Activated naive CD4-positive, alpha-beta T cell treated with anti-CD3 and anti-CD28 coated beads for 36 hours (primary cell): ENCODE measurements at regions of chr7 and their contacts with region 1.

Region 1: DNA sequence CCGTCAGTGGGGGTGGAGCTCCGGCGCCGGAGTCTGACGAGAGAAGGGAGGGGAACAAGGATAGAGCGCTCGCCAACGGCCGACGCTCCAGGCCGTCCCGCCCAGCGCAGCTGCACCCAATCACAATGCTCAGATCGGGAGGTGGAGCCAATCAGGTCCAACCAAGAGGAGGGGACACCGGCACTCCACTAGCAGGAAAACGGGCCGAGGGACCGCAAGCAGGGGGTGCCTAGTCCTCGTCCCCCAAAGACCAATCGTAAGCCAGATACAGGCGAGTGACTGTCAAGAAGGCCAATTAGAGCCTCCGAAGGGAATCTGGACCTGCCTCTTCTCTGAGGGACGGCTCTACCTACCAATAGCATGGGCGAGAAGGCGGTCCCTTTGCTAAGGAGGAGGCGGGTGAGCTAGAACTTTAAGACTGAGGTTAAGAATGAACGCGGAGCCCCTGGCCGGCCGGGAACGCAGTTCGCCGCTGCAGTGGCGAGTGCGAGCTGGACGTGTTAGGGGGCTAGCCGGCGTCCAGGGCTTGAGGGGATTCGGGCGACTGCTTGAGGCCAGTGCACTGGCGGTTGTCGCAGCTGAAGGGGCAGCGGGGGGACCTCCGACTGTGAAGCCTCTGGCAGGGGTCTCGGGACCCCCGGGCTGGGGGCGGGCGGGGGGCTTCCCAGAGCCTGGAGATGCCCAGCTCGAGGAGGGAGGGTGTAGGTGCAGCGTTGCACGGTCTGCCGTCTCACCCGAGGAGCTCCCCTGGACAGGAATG is at the start of gene FBXO24:
- DNase-seq: peak; percentile 100
- H3K4me3 Mint-ChIP-seq: peak within 1 kb of the TSS; percentile 89
- H3K27ac Mint-ChIP-seq: peak within 1 kb of the TSS; percentile 97
- H3K4me1 Mint-ChIP-seq: peaks cover 27% of the 10 kb centered on the region
- H3K27me3 Mint-ChIP-seq: peaks cover 7% of the 10 kb centered on the region
- total RNA-seq, gene FBXO24: 1.5 to 2.6 TPM

Region 2: DNA sequence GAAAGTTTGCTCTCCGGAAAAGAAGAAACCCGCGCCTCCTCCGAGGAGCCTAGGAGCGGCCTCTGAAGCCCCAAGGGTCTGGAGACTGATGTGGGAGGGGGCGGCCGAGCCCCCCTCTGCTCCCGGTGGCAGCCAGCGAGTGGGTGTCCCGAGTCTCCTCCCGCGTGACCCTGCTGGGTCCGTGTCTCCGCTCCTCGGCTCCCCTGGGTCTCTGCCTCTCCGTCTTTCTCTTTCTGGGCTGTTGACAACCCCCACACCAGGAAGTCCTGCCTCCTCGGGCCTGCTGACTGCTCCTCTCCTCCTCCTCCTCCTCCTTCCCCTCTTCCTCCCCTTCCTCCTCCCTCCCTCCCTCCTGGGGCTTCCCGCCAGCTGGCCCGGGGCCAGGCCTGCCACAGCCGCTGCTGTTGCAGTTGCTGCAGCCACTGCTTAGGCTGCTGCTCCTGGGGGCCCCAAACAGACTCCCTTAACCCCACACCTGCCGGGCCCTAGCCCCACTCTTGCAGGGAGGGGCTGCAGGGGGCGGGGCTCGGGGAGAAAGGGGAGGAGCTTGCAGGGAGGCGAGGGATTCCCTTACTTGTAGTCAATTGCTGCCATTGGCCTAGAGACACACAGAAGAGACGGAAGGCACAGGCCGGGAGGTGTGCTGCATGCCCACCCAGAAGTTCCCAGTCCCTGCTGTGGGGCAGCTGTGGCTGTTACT is 107.3 kb before region 1 on chr7 and contains the start of gene TSC22D4:
- CTCF ChIA-PET with region 1: interaction called, 4 read pairs
- intact Hi-C with region 1: loop called (anchors 1 kb)
- DNase-seq: peak; percentile 93
- H3K4me3 Mint-ChIP-seq: peak within 1 kb of the TSS; percentile 98
- H3K27ac Mint-ChIP-seq: peak within 1 kb of the TSS; percentile 92
- H3K4me1 Mint-ChIP-seq: peaks cover 42% of the 10 kb centered on the region
- H3K27me3 Mint-ChIP-seq: no peaks in the 10 kb centered on the region
- total RNA-seq, gene TSC22D4: 46.0 to 48.7 TPM

Region 3: GRCh38 chr7:100556541-100556940 is 29.9 kb before region 1 on chr7:
- CTCF ChIA-PET with region 1: interaction called, 10 read pairs
- intact Hi-C with region 1: no loop called
- DNase-seq: no peak
- H3K4me3 Mint-ChIP-seq: no peak overlapping the region
- H3K27ac Mint-ChIP-seq: no peak overlapping the region
- H3K4me1 Mint-ChIP-seq: peaks cover 9% of the 10 kb centered on the region
- H3K27me3 Mint-ChIP-seq: no peaks in the 10 kb centered on the region

Region 4: GRCh38 chr7:100604028-100604975 is 17.9 kb after region 1 on chr7:
- CTCF ChIA-PET with region 1: interaction called, 8 read pairs
- intact Hi-C with region 1: loop called (anchors 1 kb)
- DNase-seq: peak; percentile 77
- H3K4me3 Mint-ChIP-seq: peak overlapping the region; percentile 75
- H3K27ac Mint-ChIP-seq: peak overlapping the region; percentile 67
- H3K4me1 Mint-ChIP-seq: peaks cover 12% of the 10 kb centered on the region
- H3K27me3 Mint-ChIP-seq: no peaks in the 10 kb centered on the region

Region 5: GRCh38 chr7:100673300-100673941 is 87.0 kb after region 1 on chr7 and contains the start of gene GNB2:
- CTCF ChIA-PET with region 1: interaction called, 3 read pairs
- intact Hi-C with region 1: loop called (anchors 1 kb)
- DNase-seq: peak; percentile 100
- H3K4me3 Mint-ChIP-seq: peak within 1 kb of the TSS; percentile 97
- H3K27ac Mint-ChIP-seq: peak within 1 kb of the TSS; percentile 95
- H3K4me1 Mint-ChIP-seq: peaks cover 17% of the 10 kb centered on the region
- H3K27me3 Mint-ChIP-seq: no peaks in the 10 kb centered on the region
- total RNA-seq, gene GNB2: 221 TPM

Region 6: DNA sequence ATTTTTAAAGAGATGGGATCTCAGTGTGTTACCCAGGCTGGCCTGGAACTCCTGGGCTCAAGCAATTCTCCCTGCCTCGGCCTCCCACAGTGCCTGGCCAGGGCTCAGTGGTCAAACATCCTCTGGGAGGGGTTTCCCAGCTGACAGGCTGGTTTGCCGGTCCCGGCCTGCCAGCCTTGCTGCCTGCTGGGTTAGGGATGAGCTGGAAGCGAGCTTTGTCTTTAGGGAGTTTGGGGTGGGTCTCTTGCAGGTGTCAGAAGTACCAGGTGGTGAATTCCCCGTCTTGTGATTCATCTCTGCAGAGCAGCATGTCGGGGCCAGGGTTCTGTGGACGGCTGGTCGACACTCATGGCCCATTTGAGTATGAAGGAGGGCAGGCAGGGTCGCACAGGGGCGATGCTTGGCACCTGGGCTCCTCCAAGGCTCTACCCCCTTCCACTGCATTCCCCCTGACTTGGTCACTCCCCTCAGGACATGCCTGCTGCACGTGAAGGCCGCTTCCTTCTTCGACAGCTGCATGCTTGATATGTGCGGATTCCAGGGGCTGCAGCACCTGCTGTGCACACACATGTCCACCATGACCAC is 177.2 kb after region 1 on chr7:
- CTCF ChIA-PET with region 1: no interaction called
- intact Hi-C with region 1: no loop called
- DNase-seq: no peak
- H3K4me3 Mint-ChIP-seq: no peak overlapping the region
- H3K27ac Mint-ChIP-seq: no peak overlapping the region
- H3K4me1 Mint-ChIP-seq: no peaks in the 10 kb centered on the region
- H3K27me3 Mint-ChIP-seq: no peaks in the 10 kb centered on the region

Region 7: DNA sequence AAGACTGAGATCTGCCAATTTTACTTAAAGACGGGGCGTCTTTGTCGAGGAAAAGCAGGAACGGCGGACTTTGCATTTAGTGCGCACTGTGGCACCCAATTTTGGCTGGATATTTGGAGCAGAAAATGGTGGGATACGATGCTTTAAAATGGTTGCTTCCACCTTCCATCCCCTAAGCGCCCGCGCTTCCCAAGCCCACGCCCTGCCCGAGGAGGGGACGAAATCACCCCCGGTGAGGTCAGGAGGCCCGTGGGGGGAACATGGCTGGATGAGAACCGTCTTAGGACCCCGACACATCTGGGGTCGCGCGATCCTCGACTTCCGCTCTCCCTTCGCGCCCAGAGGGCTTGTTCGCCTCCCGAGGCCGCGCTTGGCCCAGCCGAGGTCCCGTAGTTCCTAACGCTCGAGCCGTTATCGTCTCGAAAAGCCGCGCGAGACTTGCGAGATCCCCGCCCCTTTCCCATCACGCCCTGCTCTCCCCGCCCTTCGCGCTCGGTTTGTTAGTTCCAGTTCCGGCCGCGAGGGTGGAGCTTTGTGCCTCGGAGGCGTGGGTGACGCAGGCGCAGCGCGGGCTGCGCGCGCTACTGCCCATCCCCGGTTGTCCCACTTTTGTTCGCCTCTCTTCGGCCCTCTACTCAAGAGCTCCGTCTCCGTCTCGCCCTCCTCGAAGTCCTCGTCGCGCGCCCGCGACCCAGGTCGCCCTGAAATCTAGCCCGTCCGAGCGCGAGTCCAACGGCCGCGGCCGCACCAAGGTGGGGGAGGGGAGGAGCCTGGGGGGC is 288.3 kb after region 1 on chr7 and contains the start of gene SRRT:
- CTCF ChIA-PET with region 1: no interaction called
- intact Hi-C with region 1: loop called (anchors 1 kb)
- DNase-seq: peak; percentile 99
- H3K4me3 Mint-ChIP-seq: peak within 1 kb of the TSS; percentile 97
- H3K27ac Mint-ChIP-seq: peak within 1 kb of the TSS; percentile 98
- H3K4me1 Mint-ChIP-seq: peaks cover 44% of the 10 kb centered on the region
- H3K27me3 Mint-ChIP-seq: no peaks in the 10 kb centered on the region
- total RNA-seq, gene SRRT: 166 to 169 TPM